ENCODE measurements at regions of chr13 and their contacts with region 1.

Region 1: GRCh38 chr13:50893211-50893852 is 16.3 kb upstream of the RNASEH2B start:
- DNase-seq: no peak
- ATAC-seq: no peak
- H3K4me3 ChIP-seq: no peak overlapping the region
- H3K27ac ChIP-seq: no peak overlapping the region
- H3K4me1 ChIP-seq: no peaks in the 10 kb centered on the region
- H3K27me3 ChIP-seq: no peaks in the 10 kb centered on the region
- CTCF ChIP-seq: no peak

Region 2: DNA sequence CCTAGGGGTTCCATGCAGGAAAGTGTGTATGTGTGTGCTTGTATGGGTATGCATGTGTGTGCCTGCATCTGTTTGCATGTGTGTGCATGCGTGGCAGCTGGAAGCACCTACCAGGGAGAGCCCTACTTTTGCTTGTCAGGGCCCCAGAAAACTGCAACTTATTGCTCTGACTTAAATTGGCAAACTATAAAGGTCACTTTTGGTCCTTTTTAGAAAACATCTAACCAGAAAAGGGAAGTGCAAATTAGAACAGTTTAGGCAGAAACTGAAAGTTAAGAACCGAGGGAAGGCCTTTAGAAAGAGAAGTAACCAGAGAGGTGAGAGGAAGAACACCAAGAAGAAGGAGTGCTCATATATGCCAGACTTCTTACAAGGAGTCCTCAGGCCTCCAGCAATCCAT is 82.3 kb before region 1 on chr13:
- CTCF ChIA-PET with region 1: no interaction called
- POLR2A ChIA-PET with region 1: no interaction called
- in situ Hi-C with region 1: no loop called
- intact Hi-C with region 1: loop called (anchors 10 kb)
- DNase-seq: no peak
- ATAC-seq: no peak
- H3K4me3 ChIP-seq: no peak overlapping the region
- H3K27ac ChIP-seq: no peak overlapping the region
- H3K4me1 ChIP-seq: no peaks in the 10 kb centered on the region
- H3K27me3 ChIP-seq: no peaks in the 10 kb centered on the region
- CTCF ChIP-seq: no peak